ENCODE measurements at regions of chr18 and their contacts with region 1.

Region 1: GRCh38 chr18:74896390-74896991 is 298.8 kb downstream of the ZNF407 start:
- DNase-seq: peak; percentile 62
- H3K4me3 ChIP-seq: no peak overlapping the region
- H3K27ac ChIP-seq: no peak overlapping the region
- H3K4me1 ChIP-seq: peaks cover 6% of the 10 kb centered on the region
- H3K27me3 ChIP-seq: no peaks in the 10 kb centered on the region
- CTCF ChIP-seq: peak; percentile 83 to 89

Region 2: GRCh38 chr18:74963820-74964446 is 67.4 kb after region 1 on chr18:
- CTCF ChIA-PET with region 1: interaction called, 3 read pairs
- dilution Hi-C with region 1: no loop called
- in situ Hi-C with region 1: no loop called
- intact Hi-C with region 1: loop called (anchors 1 kb)
- DNase-seq: peak; percentile 31
- H3K4me3 ChIP-seq: no peak overlapping the region
- H3K27ac ChIP-seq: no peak overlapping the region
- H3K4me1 ChIP-seq: no peaks in the 10 kb centered on the region
- H3K27me3 ChIP-seq: no peaks in the 10 kb centered on the region
- CTCF ChIP-seq: peak; percentile 16 to 54

Region 3: GRCh38 chr18:75041586-75041985 is 145.1 kb after region 1 on chr18:
- CTCF ChIA-PET with region 1: no interaction called
- dilution Hi-C with region 1: no loop called
- in situ Hi-C with region 1: no loop called
- intact Hi-C with region 1: loop called (anchors 10 kb)
- DNase-seq: peak; percentile 2
- H3K4me3 ChIP-seq: no peak overlapping the region
- H3K27ac ChIP-seq: no peak overlapping the region
- H3K4me1 ChIP-seq: no peaks in the 10 kb centered on the region
- H3K27me3 ChIP-seq: no peaks in the 10 kb centered on the region
- CTCF ChIP-seq: peak; percentile 43 to 46

Region 4: GRCh38 chr18:76252880-76253279 is 1356.4 kb after region 1 on chr18:
- CTCF ChIA-PET with region 1: no interaction called
- dilution Hi-C with region 1: no loop called
- in situ Hi-C with region 1: no loop called
- intact Hi-C with region 1: loop called (anchors 10 kb)
- DNase-seq: no peak
- H3K4me3 ChIP-seq: no peak overlapping the region
- H3K27ac ChIP-seq: no peak overlapping the region
- H3K4me1 ChIP-seq: no peaks in the 10 kb centered on the region
- H3K27me3 ChIP-seq: no peaks in the 10 kb centered on the region
- CTCF ChIP-seq: peak; percentile 63 to 70

Measured in mammary epithelial cell (primary cell).